ENCODE measurements at regions of chr9 and their contacts with region 1.

Region 1: DNA sequence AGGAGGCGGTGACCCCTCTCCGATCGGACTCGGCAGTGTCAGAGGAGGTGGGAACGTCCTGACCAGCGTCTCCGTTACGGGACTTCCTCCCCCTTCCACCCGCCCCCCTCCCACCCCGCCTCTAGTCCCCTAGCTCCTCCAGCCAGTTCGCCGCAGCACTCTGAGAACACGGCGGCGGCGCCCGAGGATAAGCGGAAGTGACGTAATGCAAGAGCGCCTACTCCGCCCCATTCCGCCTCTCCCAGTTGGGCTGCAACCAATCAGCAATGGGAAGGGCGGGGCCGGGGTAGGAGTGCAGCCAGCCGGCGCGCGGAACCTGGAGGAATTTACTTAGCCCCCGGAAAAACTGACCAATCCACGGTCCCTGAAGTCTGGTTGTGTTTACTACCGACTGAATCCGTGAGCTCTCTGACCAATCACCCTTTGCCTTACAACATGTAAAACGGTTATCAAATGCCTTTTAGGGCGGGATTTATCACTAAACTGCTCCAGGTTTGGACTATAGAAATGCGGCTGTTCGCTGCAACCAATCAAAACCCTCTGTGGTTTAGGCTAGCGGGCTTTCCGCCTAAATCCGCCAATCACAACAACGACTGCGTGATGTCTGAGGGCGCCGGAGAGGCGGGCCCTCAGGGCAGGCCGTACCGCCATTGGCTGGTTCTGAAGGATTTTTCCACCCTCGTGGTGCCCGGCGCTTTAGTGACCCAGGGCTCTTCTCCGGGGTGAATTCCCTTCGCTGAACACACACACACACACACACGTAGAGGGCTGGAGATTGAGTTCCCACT is at the start of gene ZBTB5:
- DNase-seq: peak; percentile 100
- ATAC-seq: peak; percentile 77
- H3K4me3 ChIP-seq: peak within 1 kb of the TSS; percentile 90 to 99 (median 95)
- H3K4me3 Mint-ChIP-seq: peak within 1 kb of the TSS; percentile 95
- H3K27ac ChIP-seq: peak within 1 kb of the TSS; percentile 93 to 98
- H3K27ac Mint-ChIP-seq: peak within 1 kb of the TSS; percentile 98
- H3K4me1 ChIP-seq: peaks cover 23 to 27% of the 10 kb centered on the region in 2 donors
- H3K4me1 Mint-ChIP-seq: peaks cover 30% of the 10 kb centered on the region
- H3K27me3 ChIP-seq: no peaks in the 10 kb centered on the region
- H3K27me3 Mint-ChIP-seq: no peaks in the 10 kb centered on the region
- CTCF ChIP-seq: no peak
- total RNA-seq, gene ZBTB5: 25.1 and 27.6 TPM in 2 replicates

Region 2: GRCh38 chr9:37119907-37120842 is 345.3 kb before region 1 on chr9 and contains the start of gene ZCCHC7:
- CTCF ChIA-PET with region 1: no interaction called
- POLR2A ChIA-PET with region 1: no interaction called
- intact Hi-C with region 1: loop called (anchors 1 kb)
- DNase-seq: peak; percentile 98
- ATAC-seq: peak; percentile 92
- H3K4me3 ChIP-seq: peak within 1 kb of the TSS; percentile 80 to 97 (median 94)
- H3K4me3 Mint-ChIP-seq: peak within 1 kb of the TSS; percentile 100
- H3K27ac ChIP-seq: peak within 1 kb of the TSS; percentile 93 to 98
- H3K27ac Mint-ChIP-seq: peak within 1 kb of the TSS; percentile 100
- H3K4me1 ChIP-seq: peaks cover 36 to 44% of the 10 kb centered on the region in 2 donors
- H3K4me1 Mint-ChIP-seq: peaks cover 44% of the 10 kb centered on the region
- H3K27me3 ChIP-seq: no peaks in the 10 kb centered on the region
- H3K27me3 Mint-ChIP-seq: no peaks in the 10 kb centered on the region
- CTCF ChIP-seq: no peak
- total RNA-seq, gene ZCCHC7: 81.9 and 83.5 TPM in 2 replicates

Region 3: DNA sequence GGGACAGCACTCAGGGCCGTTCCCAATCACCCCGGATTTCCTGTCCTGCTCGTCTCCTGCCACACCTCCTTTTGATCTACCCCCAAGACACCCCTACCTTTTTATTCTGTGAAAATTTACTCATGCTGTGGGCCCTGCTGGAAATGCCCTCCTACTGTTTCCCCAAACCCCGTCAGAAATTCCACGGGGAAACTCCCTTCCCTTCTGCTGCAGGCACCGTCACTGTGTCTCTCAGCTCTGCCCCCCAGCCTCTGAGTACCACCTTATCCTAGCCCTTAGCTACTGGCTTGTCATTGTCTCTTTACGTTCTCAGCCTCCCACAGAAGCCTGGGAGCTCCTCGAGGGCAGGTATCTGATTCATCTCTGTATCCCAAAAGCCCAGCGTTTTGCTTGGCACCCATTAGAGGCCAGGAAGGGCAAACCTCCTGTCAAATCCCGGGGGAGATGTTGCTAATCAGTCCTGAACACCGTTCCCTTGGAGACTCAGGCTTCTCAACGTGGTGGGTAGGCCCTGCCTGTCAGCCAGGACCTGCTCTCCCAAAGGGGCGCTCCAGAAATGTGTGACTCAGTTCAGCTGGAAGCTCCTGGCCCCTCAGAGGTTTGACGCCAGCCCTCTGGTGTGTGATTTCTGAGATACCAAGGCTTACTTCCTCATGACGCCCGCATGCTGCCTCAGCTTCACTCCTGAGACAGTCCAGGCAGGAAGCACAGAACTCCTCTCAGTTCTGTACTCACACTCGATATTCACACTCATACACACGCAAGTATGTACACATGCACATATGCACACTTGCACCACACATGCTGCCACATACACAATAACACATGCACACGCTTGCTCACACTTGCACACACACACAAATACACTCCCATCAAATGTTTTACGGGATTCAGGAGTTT is 93.6 kb before region 1 on chr9:
- CTCF ChIA-PET with region 1: no interaction called
- POLR2A ChIA-PET with region 1: interaction called, 6 read pairs
- intact Hi-C with region 1: loop called (anchors 2 kb)
- DNase-seq: peak; percentile 74
- ATAC-seq: peak; percentile 4
- H3K4me3 ChIP-seq: peak overlapping the region in 2 of 5 experiments; percentile 25 to 38
- H3K4me3 Mint-ChIP-seq: peak overlapping the region; percentile 70
- H3K27ac ChIP-seq: peak overlapping the region; percentile 78 to 94
- H3K27ac Mint-ChIP-seq: peak overlapping the region; percentile 88
- H3K4me1 ChIP-seq: peaks cover 95 to 100% of the 10 kb centered on the region in 2 donors
- H3K4me1 Mint-ChIP-seq: peaks cover 88% of the 10 kb centered on the region
- H3K27me3 ChIP-seq: no peaks in the 10 kb centered on the region
- H3K27me3 Mint-ChIP-seq: no peaks in the 10 kb centered on the region
- CTCF ChIP-seq: no peak

Region 4: DNA sequence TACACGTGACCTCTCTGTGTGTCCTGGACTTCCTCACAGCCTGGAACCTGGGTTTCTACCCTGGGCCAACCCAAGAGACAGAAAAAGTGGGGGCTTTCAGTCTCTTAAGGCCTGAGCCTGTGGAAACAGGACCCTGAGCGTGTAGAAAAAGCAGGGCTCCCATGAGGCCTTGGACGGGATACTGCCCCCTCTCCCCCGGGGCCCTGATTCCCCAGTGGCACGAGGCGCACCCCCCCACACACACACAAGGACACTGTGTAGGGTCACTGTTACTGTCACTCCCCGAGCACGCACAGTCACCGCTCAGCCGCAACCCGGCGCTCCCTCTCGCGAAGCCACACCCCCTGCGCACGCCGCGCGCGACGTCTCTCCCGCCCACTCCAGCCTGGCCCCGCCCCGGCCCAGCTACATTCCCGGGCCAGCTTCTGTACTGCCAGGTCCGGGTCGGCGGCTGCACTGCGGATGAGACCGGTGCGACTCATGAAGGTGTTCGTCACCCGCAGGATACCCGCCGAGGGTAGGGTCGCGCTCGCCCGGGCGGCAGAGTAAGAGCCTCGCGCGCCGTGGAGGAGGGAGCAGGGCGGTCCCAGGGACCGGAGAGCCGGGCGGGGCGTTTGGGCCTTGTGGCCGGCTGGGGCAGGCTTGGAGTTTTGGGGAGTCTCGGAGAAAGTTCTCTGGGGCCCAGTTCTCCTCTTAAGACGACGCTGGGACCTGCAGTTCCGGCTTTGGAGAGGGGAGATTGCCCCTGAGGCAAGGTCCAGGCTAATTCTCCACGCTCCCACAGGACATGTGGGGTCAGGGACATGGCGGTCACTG is 42.9 kb before region 1 on chr9 and contains the start of gene GRHPR:
- CTCF ChIA-PET with region 1: interaction called, 3 read pairs
- POLR2A ChIA-PET with region 1: interaction called, 5 read pairs
- intact Hi-C with region 1: loop called (anchors 1 kb)
- DNase-seq: peak; percentile 90
- ATAC-seq: peak; percentile 99
- H3K4me3 ChIP-seq: peak within 1 kb of the TSS; percentile 80 to 88 (median 82)
- H3K4me3 Mint-ChIP-seq: peak within 1 kb of the TSS; percentile 97
- H3K27ac ChIP-seq: peak within 1 kb of the TSS; percentile 68 to 80
- H3K27ac Mint-ChIP-seq: peak within 1 kb of the TSS; percentile 92
- H3K4me1 ChIP-seq: peaks cover 18 to 31% of the 10 kb centered on the region in 2 donors
- H3K4me1 Mint-ChIP-seq: peaks cover 28% of the 10 kb centered on the region
- H3K27me3 ChIP-seq: no peaks in the 10 kb centered on the region
- H3K27me3 Mint-ChIP-seq: no peaks in the 10 kb centered on the region
- CTCF ChIP-seq: no peak
- total RNA-seq, gene GRHPR: 121 and 122 TPM in 2 replicates

Region 5: DNA sequence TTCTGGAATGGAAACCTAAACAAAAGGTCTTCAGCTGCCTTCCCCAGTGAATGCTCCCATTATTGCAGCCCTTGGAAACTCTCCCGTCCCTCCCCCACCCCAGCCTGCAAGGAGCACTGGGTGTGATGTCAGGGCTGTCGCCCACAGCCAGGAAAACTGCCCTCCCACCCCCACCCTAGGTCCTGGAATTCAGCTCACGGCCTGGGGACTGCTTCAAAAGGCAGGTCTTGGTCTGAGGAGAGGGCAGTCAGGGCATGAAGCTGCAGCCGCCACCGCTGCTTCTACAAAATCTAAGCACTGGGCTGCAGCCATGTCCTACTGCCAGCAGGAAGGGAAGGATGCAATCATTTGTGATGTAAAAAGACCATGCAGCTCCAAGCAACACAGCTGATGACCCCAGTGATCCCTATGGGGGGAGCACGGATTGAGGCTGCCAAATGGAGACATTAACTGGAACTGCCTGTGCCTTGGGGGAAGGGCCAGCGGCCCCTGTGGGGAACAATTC is 31.5 kb before region 1 on chr9:
- CTCF ChIA-PET with region 1: no interaction called
- POLR2A ChIA-PET with region 1: no interaction called
- intact Hi-C with region 1: no loop called
- DNase-seq: no peak
- ATAC-seq: no peak
- H3K4me3 ChIP-seq: no peak overlapping the region
- H3K4me3 Mint-ChIP-seq: no peak overlapping the region
- H3K27ac ChIP-seq: no peak overlapping the region
- H3K27ac Mint-ChIP-seq: peak overlapping the region; percentile 41
- H3K4me1 ChIP-seq: peaks cover 16 to 26% of the 10 kb centered on the region in 2 donors
- H3K4me1 Mint-ChIP-seq: peaks cover 21% of the 10 kb centered on the region
- H3K27me3 ChIP-seq: no peaks in the 10 kb centered on the region
- H3K27me3 Mint-ChIP-seq: no peaks in the 10 kb centered on the region
- CTCF ChIP-seq: no peak

Region 6: DNA sequence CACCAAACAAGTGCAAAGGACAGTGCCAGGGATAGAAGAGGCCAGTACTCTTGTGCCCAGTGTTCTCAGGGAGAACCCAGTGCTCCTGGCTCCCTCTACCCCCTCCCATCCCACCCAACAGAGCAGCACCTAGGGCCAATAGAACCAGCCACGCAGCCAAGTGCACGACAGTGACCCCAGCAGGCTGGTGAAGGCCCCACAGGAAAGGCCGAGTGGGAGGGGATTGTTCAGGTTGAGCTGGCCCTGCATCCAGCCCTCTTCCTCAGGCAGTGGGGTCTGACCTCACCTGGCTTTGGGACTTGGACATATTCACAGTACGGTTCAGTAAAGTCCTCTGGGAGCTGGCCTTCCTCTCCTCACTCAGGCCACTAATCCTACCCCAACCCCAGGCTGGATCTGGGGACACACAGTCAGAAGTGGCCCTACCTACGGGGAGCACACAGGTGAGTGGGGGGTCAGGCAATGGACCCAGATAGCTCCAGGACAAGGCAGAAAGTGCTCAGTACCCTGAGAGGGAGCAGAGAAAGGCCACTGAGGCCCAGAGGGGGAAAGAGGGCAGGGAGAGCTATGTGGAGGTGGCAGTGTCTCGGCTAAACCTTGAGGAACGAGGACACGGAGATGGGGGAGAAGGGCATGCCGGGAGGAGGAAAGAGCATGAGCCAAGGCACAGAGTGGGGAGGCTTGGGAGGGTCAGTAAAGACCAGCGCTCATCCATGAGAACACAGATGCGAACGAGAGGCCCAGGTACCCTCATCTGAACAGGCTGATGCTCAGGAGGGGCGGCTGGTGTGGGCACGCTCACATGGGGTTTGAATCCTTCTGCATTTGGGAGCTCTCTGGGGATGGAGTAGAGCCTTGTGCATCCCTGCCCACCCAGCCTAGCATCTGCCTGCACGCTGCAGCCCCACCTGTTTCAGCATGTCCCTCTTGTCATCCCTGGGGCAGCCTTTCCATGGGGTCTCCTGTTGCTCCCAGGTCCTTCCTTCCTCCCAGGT is 45.9 kb after region 1 on chr9:
- CTCF ChIA-PET with region 1: no interaction called
- POLR2A ChIA-PET with region 1: no interaction called
- intact Hi-C with region 1: no loop called
- DNase-seq: peak; percentile 19
- ATAC-seq: peak; percentile 56
- H3K4me3 ChIP-seq: no peak overlapping the region
- H3K4me3 Mint-ChIP-seq: no peak overlapping the region
- H3K27ac ChIP-seq: no peak overlapping the region
- H3K27ac Mint-ChIP-seq: peak overlapping the region; percentile 37
- H3K4me1 ChIP-seq: peaks cover 0 to 4% of the 10 kb centered on the region in 2 donors
- H3K4me1 Mint-ChIP-seq: peaks cover 13% of the 10 kb centered on the region
- H3K27me3 ChIP-seq: no peaks in the 10 kb centered on the region
- H3K27me3 Mint-ChIP-seq: no peaks in the 10 kb centered on the region
- CTCF ChIP-seq: no peak

Region 7: DNA sequence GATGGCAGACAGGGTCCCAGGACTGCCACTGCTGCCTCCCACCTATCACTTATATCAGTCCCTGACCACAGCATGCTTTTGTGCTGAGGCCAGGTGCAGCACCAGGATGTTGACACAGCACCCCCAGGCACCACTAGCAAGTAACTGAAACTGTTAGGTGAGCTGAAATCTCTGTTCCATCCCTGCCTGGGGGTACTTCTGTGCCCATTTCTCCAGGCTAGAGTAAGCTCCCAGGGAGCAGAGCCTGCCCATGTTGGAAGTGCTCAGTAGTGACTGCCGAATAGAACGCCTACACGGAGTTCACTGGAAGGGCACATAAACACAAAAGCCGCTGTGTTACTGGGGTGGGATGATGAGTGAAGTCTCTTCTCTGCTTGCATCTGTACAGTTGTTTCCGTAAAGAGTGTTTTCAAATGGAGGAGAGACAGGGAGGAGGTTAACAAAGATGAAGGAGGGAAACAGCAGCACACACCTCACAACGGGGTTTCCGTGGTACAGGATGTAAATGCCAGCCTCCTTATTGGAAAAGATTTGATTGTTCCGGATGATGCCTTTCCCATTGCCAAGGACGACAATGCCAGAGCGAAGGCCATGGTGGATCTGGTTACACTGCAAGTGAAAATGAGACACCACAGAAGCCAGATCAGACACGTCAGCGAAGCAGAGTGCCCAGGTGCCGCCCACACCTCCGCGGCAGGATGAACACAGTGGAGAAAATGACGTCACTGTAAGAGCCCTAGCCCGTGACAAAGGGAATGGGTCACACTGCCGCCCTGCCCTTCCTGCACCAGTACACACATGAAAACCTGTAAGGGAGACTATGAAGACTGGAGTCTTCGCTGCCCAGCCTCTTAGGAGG is 63.4 kb after region 1 on chr9:
- CTCF ChIA-PET with region 1: interaction called, 3 read pairs
- POLR2A ChIA-PET with region 1: no interaction called
- intact Hi-C with region 1: loop called (anchors 1 kb)
- DNase-seq: peak; percentile 82
- ATAC-seq: peak; percentile 80
- H3K4me3 ChIP-seq: no peak overlapping the region
- H3K4me3 Mint-ChIP-seq: peak overlapping the region; percentile 78
- H3K27ac ChIP-seq: peak overlapping the region in 1 of 2 donors; percentile 39
- H3K27ac Mint-ChIP-seq: peak overlapping the region; percentile 84
- H3K4me1 ChIP-seq: peaks cover 0 to 28% of the 10 kb centered on the region in 2 donors
- H3K4me1 Mint-ChIP-seq: peaks cover 37% of the 10 kb centered on the region
- H3K27me3 ChIP-seq: no peaks in the 10 kb centered on the region
- H3K27me3 Mint-ChIP-seq: no peaks in the 10 kb centered on the region
- CTCF ChIP-seq: no peak

Region 8: GRCh38 chr9:37592108-37592951 is 126.9 kb after region 1 on chr9 and contains the start of gene TOMM5:
- CTCF ChIA-PET with region 1: interaction called, 3 read pairs
- POLR2A ChIA-PET with region 1: interaction called, 5 read pairs
- intact Hi-C with region 1: loop called (anchors 1 kb)
- DNase-seq: peak; percentile 93
- ATAC-seq: peak; percentile 96
- H3K4me3 ChIP-seq: peak within 1 kb of the TSS; percentile 87 to 100 (median 97)
- H3K4me3 Mint-ChIP-seq: peak within 1 kb of the TSS; percentile 99
- H3K27ac ChIP-seq: peak within 1 kb of the TSS; percentile 71 to 83
- H3K27ac Mint-ChIP-seq: peak within 1 kb of the TSS; percentile 96
- H3K4me1 ChIP-seq: peaks cover 23 to 36% of the 10 kb centered on the region in 2 donors
- H3K4me1 Mint-ChIP-seq: peaks cover 46% of the 10 kb centered on the region
- H3K27me3 ChIP-seq: peaks cover 0 to 5% (median 0%) of the 10 kb centered on the region in 4 experiments
- H3K27me3 Mint-ChIP-seq: peaks cover 4% of the 10 kb centered on the region
- CTCF ChIP-seq: no peak
- total RNA-seq, gene TOMM5: 39.7 and 44.4 TPM in 2 replicates

Region 9: DNA sequence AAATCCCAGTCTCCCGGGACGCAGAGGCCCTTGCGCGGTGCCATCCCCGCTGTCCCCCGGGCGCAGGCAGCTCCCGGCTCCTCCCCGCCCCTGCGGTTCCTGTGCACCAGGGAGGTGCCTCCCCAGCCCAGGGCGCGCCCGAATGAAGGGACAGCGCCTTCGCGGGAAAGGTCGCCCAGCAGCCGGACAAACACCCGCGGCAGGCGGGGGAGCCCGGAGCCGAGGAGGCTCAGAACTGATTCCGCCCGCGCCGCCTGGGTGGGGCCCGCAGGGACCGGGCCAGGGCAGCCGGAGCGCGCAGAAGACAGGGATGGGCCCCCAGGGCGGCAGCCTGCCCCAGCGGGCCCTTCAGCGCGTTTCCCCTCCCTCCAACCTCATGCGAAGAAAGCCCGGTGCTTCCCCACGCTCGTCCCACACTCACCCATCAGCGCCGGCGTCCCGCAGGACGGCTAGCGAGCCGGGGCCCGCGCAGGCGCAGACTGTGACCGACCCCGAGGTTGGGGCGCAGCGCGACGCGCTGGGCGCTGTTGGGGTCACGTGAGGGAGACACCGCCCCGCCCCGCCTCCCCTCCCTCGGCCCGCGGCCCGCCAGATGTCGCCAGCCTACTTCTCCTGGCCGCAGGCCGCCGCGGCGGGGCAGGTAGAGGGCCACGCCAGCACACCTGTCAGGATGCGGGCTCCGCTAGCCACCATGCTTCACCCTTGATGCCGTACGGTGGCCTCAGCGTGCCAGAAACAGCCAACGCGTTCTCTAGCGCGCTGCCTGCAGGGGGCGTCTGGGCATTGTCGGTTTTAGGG is 438.4 kb after region 1 on chr9 and contains the start of gene SLC25A51:
- CTCF ChIA-PET with region 1: no interaction called
- POLR2A ChIA-PET with region 1: interaction called, 3 read pairs
- intact Hi-C with region 1: loop called (anchors 1 kb)
- DNase-seq: peak; percentile 98
- ATAC-seq: peak; percentile 88
- H3K4me3 ChIP-seq: peak within 1 kb of the TSS; percentile 60 to 83 (median 79)
- H3K4me3 Mint-ChIP-seq: peak within 1 kb of the TSS; percentile 94
- H3K27ac ChIP-seq: peak within 1 kb of the TSS; percentile 71 to 78
- H3K27ac Mint-ChIP-seq: peak within 1 kb of the TSS; percentile 96
- H3K4me1 ChIP-seq: peaks cover 14 to 20% of the 10 kb centered on the region in 2 donors
- H3K4me1 Mint-ChIP-seq: peaks cover 20% of the 10 kb centered on the region
- H3K27me3 ChIP-seq: no peaks in the 10 kb centered on the region
- H3K27me3 Mint-ChIP-seq: no peaks in the 10 kb centered on the region
- CTCF ChIP-seq: peak; percentile 82
- total RNA-seq, gene SLC25A51: 27.8 and 28.1 TPM in 2 replicates

Measured in B cell (primary cell).